ENCODE measurements at regions of chr9 and their contacts with region 1.

Region 1: DNA sequence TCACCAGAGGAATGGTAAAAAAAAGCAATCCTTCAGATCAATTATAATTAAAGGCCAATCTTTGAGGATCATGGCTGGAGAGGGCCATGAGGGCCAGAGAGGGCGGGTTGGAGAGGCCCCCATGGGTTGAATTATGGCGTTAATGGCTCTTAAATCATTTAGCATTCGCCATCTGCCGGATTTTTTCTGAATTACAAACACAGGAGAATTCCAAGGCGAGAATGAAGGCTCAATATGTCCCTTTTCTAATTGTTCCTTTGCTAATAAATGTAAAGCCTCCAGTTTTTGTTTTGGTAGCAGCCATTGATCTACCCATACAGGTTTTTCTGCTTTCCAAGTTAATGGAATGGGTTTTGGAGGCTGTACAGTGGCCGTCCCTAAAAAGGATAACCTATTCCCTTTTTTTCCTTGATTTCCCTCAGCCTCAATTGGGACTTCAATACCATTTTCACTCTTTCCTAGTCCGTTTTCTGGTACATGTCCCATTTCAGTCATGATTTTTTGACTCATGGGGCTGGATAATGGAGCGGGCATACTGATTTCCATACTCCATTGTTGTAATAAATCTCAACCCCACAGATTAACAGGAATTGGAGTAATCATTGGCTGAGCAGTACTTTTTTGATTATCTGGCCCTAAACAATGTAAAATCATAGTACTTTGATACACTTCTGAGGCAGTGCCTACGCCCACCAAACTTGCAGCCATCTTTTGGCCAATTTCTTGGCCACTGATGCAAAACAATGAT is 6.7 kb upstream of the TMEM141 start:
- DNase-seq: peak; percentile 45
- ATAC-seq: peak; percentile 21; the same call in 1 of the 2 replicates
- H3K4me3 ChIP-seq: no peak overlapping the region
- H3K27ac ChIP-seq: no peak overlapping the region
- H3K4me1 ChIP-seq: peaks cover 4% of the 10 kb centered on the region; the same call in 1 of the 2 replicates
- H3K27me3 ChIP-seq: no peaks in the 10 kb centered on the region
- CTCF ChIP-seq: peak; percentile 45; the same call in 1 of the 2 replicates

Region 2: GRCh38 chr9:136769710-136770191 is 14.7 kb before region 1 on chr9:
- CTCF ChIA-PET with region 1: interaction called, 3 read pairs
- POLR2A ChIA-PET with region 1: no interaction called
- intact Hi-C with region 1: loop called (anchors 2 kb)
- DNase-seq: peak; percentile 44
- ATAC-seq: peak; percentile 51; the same call in 1 of the 2 replicates
- H3K4me3 ChIP-seq: no peak overlapping the region
- H3K27ac ChIP-seq: no peak overlapping the region
- H3K4me1 ChIP-seq: peaks cover 3% of the 10 kb centered on the region; the same call in 1 of the 2 replicates
- H3K27me3 ChIP-seq: no peaks in the 10 kb centered on the region; the same call in 1 of the 2 replicates
- CTCF ChIP-seq: peak; percentile 39

Region 3: GRCh38 chr9:136885950-136886578 is 101.6 kb after region 1 on chr9 and contains the start of gene TRAF2:
- CTCF ChIA-PET with region 1: no interaction called
- POLR2A ChIA-PET with region 1: no interaction called
- intact Hi-C with region 1: no loop called
- DNase-seq: peak; percentile 97
- ATAC-seq: peak; percentile 97
- H3K4me3 ChIP-seq: peak within 1 kb of the TSS; percentile 95
- H3K27ac ChIP-seq: peak within 1 kb of the TSS; percentile 32
- H3K4me1 ChIP-seq: peaks cover 10% of the 10 kb centered on the region; the same call in 1 of the 2 replicates
- H3K27me3 ChIP-seq: no peaks in the 10 kb centered on the region
- CTCF ChIP-seq: no peak
- total RNA-seq, gene TRAF2: 11.5 and 25.4 TPM in 2 replicates